H1 (cell line): ENCODE measurements at regions of chr6 and their contacts with region 1.

Region 1: DNA sequence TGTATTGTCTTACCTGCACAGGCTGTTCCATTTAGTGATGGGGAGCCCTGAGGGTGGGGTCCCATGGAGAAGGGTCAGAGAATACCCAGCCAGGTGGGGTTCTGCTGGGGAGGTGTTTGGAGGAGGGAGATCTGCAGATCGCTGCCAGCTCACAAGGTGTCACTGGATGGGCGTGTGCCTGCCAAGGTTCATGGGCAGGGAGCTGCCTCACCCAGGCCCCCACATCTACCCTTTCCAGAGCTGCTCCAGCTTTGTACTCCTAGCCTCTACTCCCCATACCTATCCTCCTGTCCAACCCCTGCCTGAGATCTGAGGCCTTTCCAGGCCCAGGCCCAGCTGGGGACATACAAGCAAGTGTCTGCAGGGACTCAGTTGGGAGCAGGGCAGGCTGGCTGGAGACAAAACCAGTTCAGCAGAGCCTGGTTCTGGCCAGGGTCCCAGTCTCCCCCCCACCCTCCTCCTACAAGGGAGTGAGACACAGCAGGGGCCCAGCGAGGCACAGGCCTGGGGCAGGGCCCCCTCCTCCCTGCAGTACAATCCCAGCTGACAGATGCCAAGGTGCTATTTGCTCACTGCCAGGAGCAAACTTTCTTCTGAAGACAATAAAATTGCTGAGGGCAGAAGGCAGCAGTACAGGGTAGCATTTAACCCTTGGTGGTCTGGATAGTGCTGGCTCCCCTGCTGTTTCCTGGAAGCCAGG is 19.7 kb downstream of the SPDEF start:
- DNase-seq: no peak
- H3K4me3 ChIP-seq: no peak overlapping the region
- H3K27ac ChIP-seq: no peak overlapping the region
- H3K4me1 ChIP-seq: peaks cover 0 to 4% (median 2%) of the 10 kb centered on the region in 4 experiments; a peak in 4 of 7 replicates
- H3K27me3 ChIP-seq: no peaks in the 10 kb centered on the region
- CTCF ChIP-seq: no peak
- EP300 ChIP-seq: no peak
- POLR2A ChIP-seq: no peak
- RAD21 ChIP-seq: no peak

Region 2: DNA sequence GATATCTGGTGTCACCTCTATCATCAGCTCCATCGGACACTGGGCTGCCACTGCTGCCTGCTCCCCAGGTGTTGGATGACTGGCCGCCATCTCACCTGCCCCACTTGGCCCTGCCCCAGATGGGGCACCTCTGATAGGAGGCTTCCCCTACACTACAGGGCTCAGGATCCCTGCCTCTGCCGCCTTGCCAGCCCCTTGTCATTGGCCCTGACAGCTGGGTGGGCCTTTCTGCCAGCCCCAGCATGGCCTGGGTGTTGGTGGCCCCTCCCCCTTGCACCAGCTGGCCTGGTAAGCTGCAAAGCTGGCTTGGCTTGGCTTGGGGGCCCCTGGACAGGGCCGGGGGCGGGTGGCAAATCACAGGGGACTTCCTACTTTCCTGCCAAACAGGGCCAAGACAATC is 60.0 kb before region 1 on chr6:
- CTCF ChIA-PET with region 1: no interaction called
- POLR2A ChIA-PET with region 1: no interaction called
- DNase-seq: no peak
- H3K4me3 ChIP-seq: no peak overlapping the region
- H3K27ac ChIP-seq: no peak overlapping the region
- H3K4me1 ChIP-seq: peaks cover 0 to 17% (median 5%) of the 10 kb centered on the region in 4 experiments; a peak in 4 of 7 replicates
- H3K27me3 ChIP-seq: no peaks in the 10 kb centered on the region
- CTCF ChIP-seq: no peak
- EP300 ChIP-seq: no peak
- POLR2A ChIP-seq: no peak
- RAD21 ChIP-seq: no peak

Region 3: GRCh38 chr6:34546551-34547321 is 10.3 kb after region 1 on chr6:
- CTCF ChIA-PET with region 1: interaction called, 16 read pairs
- POLR2A ChIA-PET with region 1: interaction called, 7 read pairs
- DNase-seq: no peak
- H3K4me3 ChIP-seq: no peak overlapping the region
- H3K27ac ChIP-seq: no peak overlapping the region
- H3K4me1 ChIP-seq: no peaks in the 10 kb centered on the region; a peak in 2 of 7 replicates
- H3K27me3 ChIP-seq: no peaks in the 10 kb centered on the region
- CTCF ChIP-seq: no peak
- EP300 ChIP-seq: no peak
- POLR2A ChIP-seq: no peak
- RAD21 ChIP-seq: no peak

Region 4: GRCh38 chr6:34819571-34820480 is 283.4 kb after region 1 on chr6:
- CTCF ChIA-PET with region 1: no interaction called
- POLR2A ChIA-PET with region 1: no interaction called
- DNase-seq: no peak
- H3K4me3 ChIP-seq: no peak overlapping the region
- H3K27ac ChIP-seq: no peak overlapping the region
- H3K4me1 ChIP-seq: no peaks in the 10 kb centered on the region; a peak in 1 of 7 replicates
- H3K27me3 ChIP-seq: no peaks in the 10 kb centered on the region
- CTCF ChIP-seq: no peak
- EP300 ChIP-seq: no peak
- POLR2A ChIP-seq: no peak
- RAD21 ChIP-seq: no peak